ENCODE measurements at regions of chr1 and their contacts with region 1.

Region 1: DNA sequence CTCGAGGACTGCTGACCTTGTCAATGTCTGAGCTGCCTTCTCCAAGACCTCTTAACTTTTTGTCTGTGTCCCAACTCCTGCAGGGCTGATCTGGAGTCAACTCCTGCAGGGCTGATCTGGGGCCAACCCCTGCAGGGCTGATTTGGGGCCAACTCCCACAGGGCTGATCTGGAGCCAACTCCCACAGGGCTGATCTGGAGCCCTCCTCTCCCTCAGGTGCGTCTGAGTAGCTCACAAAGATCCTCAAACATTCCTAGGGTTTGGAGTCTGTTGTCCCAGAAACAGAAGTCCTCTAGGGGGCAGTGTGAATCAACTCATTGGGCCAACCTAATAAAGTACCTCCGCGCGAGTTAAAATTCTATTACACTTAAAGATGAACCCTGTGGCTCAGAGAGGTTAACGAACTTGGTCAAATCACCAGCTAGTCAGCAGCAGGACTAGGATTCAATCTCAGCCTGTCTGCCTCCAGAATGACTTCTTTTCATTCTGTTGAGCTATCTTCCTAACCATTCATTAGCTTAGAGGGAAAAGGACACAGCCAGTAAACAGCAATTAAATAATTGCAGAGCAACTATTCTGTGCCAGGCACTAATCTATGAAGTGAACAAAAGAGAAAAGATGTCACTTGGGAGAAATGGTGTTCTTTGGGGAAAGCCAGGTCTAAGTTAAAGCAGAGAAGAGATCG is 17.2 kb upstream of the RLF start:
- DNase-seq: peak; percentile 65
- ATAC-seq: peak; percentile 99
- H3K4me3 Mint-ChIP-seq: no peak overlapping the region
- H3K27ac Mint-ChIP-seq: peak overlapping the region; percentile 41; the same call in 1 of the 2 replicates
- H3K4me1 Mint-ChIP-seq: peaks cover 5% of the 10 kb centered on the region
- H3K27me3 Mint-ChIP-seq: peaks cover 39% of the 10 kb centered on the region
- CTCF ChIP-seq: peak; percentile 48; the same call in 1 of the 2 replicates

Region 2: DNA sequence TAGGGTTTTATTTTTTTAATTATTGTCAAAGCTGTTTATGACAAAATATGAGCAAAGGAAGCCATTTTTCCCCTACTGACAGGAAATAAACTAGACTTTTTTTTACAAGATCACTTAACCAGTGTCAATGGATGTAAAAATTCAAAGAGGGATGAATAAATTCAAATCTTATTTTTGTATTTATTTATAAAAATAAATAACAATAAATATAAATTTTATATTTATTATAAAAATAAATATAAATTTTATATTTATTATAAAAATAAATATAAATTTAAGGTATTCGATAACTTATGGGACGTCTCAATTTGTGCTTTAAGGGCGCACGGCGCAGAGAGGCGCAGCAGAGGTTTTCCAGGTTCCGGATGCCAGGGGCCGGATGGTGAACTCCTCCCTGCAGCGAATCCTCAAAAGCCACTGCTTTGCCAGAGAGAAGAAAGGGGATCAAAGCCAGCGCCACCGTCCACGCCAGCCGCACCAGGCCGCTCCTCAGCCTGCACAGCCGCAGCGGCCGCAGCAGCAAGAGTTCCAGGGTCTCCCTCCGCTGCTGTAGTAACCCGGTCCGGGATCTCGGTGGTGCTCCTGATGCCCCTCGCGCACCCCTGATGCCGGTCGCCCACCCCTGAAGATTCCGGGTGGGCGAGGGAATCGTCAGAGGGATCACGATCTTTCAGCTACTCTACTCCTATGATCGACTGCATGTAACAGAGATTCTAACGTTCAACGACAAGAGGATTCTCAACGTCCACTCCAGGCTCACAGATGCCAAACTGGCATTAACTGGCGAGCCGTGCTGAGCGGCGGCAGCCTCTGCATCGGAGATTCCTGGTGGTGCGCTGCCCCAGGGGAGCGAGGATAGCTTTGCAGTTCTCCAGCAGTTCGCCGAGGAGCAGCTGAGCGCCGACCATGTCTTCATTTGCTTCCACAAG is 11.4 kb before region 1 on chr1:
- CTCF ChIA-PET with region 1: interaction called, 27 read pairs
- POLR2A ChIA-PET with region 1: no interaction called
- DNase-seq: no peak
- ATAC-seq: no peak
- H3K4me3 Mint-ChIP-seq: no peak overlapping the region
- H3K27ac Mint-ChIP-seq: no peak overlapping the region
- H3K4me1 Mint-ChIP-seq: no peaks in the 10 kb centered on the region
- H3K27me3 Mint-ChIP-seq: peaks cover 6% of the 10 kb centered on the region
- CTCF ChIP-seq: no peak

Region 3: DNA sequence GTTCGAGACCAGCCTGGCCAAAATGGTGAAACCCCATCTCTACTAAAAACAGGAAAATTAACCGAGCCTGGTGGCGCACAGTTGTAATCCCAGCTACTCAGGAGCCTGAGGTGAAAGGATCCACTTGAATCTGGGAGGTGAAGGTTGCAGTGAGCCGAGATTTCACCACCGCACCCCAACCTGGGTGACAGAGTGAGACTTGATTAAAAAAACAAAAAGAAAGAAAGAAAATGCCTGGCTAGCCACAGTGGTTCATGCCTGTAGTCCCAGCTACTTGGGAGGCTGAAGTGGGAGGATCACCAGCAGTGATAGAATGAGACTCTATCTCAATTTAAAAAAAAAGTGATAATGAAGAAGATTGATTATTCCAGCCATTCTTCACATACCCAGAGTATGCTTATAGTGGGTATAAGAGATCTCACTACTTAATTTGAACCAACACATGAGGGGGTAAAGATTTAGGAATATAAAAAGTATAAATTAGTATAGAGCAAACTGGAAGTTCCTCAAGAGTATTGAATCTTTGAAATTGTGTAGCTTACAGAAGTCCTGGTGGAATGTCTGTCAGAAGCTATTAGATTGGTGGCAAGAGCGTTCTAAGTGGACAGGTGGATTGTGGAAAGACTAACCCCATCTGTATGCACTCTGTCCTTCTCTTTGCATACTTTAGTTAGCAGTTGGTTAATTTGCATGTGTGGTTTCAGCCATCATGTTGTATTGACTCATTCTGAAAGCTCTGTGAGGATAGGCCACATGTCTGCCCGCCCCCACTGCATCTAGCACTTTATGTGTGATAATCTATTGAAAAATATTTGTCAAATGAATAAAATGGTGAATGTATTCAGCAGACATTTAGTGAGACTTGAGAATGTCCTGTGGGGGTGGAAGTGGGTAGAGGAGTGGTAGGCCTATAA is 42.2 kb after region 1 on chr1:
- CTCF ChIA-PET with region 1: interaction called, 18 read pairs
- POLR2A ChIA-PET with region 1: no interaction called
- DNase-seq: no peak
- ATAC-seq: no peak
- H3K4me3 Mint-ChIP-seq: no peak overlapping the region
- H3K27ac Mint-ChIP-seq: peak overlapping the region; percentile 33
- H3K4me1 Mint-ChIP-seq: peaks cover 15% of the 10 kb centered on the region
- H3K27me3 Mint-ChIP-seq: no peaks in the 10 kb centered on the region
- CTCF ChIP-seq: no peak

Region 4: GRCh38 chr1:40305457-40305856 is 161.4 kb after region 1 on chr1:
- CTCF ChIA-PET with region 1: interaction called, 22 read pairs
- POLR2A ChIA-PET with region 1: no interaction called
- DNase-seq: peak; percentile 27
- ATAC-seq: peak; percentile 64
- H3K4me3 Mint-ChIP-seq: no peak overlapping the region
- H3K27ac Mint-ChIP-seq: no peak overlapping the region
- H3K4me1 Mint-ChIP-seq: no peaks in the 10 kb centered on the region
- H3K27me3 Mint-ChIP-seq: peaks cover 26% of the 10 kb centered on the region
- CTCF ChIP-seq: no peak

Region 5: GRCh38 chr1:40363721-40364120 is 219.7 kb after region 1 on chr1:
- CTCF ChIA-PET with region 1: interaction called, 11 read pairs
- POLR2A ChIA-PET with region 1: no interaction called
- DNase-seq: peak; percentile 27
- ATAC-seq: peak; percentile 87
- H3K4me3 Mint-ChIP-seq: no peak overlapping the region
- H3K27ac Mint-ChIP-seq: no peak overlapping the region
- H3K4me1 Mint-ChIP-seq: peaks cover 3% of the 10 kb centered on the region; the same call in 1 of the 2 replicates
- H3K27me3 Mint-ChIP-seq: peaks cover 18% of the 10 kb centered on the region
- CTCF ChIP-seq: no peak

Region 6: DNA sequence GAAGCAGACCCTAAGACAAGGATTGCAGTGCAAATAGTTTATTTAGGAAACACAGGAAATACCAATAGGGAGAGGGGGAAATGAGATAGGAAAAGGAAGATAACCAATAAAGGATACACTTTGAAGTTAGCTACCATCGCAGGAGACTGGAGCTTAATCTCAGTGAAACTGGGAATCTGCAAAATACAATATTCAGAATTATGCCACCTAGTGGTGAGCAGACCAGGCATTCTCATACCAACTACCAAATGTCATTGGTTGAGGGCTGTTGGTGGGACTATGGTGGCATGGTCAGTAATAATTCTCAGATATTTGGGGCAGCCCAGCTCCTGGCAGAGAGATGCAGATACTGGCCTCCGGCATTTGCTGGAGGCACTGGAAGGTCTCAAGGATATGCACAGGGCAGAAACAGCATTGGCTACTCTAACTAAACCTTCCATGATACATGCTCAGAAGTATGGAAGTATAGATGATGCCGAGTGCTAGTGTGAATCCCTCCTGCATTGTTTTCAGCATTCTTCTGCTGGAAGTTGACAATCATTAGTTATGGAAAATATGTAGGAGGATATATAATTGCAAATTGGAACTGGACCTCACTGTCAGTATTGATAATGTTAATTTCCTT is 294.5 kb after region 1 on chr1:
- CTCF ChIA-PET with region 1: interaction called, 17 read pairs
- POLR2A ChIA-PET with region 1: no interaction called
- DNase-seq: no peak
- ATAC-seq: peak; percentile 77
- H3K4me3 Mint-ChIP-seq: no peak overlapping the region
- H3K27ac Mint-ChIP-seq: no peak overlapping the region
- H3K4me1 Mint-ChIP-seq: no peaks in the 10 kb centered on the region
- H3K27me3 Mint-ChIP-seq: no peaks in the 10 kb centered on the region
- CTCF ChIP-seq: peak; percentile 41